Spleen (tissue), 13 donors: ENCODE measurements at regions of chr17 and their contacts with region 1.

Region 1: GRCh38 chr17:61389670-61390478 is 9.8 kb upstream of the TBX2 start:
- DNase-seq: peak; percentile 86
- H3K4me3 ChIP-seq: no peak overlapping the region
- H3K27ac ChIP-seq: peak overlapping the region in 1 of 8 donors; percentile 34
- H3K4me1 ChIP-seq: peaks cover 2 to 22% (median 7%) of the 10 kb centered on the region in 6 donors
- H3K27me3 ChIP-seq: peaks cover 0 to 41% (median 1%) of the 10 kb centered on the region in 7 donors
- CTCF ChIP-seq: peak; percentile 38 to 84 (median 74)
- POLR2A ChIP-seq: no peak

Region 2: DNA sequence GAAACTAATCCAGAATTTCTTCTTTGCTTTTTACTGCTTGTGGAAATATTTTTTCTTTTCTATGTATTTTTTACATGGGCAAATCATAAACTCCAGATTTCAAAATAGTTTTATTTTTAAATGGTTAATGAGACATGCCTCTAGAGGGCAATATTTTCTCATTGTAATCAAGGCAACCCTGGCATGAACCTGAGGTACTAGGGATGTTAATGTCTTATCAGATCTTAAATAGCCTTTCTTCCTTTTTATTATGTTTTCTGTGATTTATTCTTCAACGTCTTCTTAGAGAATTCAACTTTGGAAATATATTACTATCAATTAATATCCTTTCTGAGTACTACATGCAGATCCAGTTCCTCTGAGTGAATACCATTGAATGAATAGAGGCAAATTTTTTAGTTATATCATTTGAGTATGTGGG is 387.5 kb before region 1 on chr17:
- intact Hi-C with region 1: loop called (anchors 10 kb)
- DNase-seq: no peak
- H3K4me3 ChIP-seq: no peak overlapping the region
- H3K27ac ChIP-seq: no peak overlapping the region
- H3K4me1 ChIP-seq: peaks cover 0 to 6% (median 0%) of the 10 kb centered on the region in 6 donors
- H3K27me3 ChIP-seq: no peaks in the 10 kb centered on the region
- CTCF ChIP-seq: peak in 8 of 11 experiments; percentile 30 to 53 (median 43)
- POLR2A ChIP-seq: no peak

Region 3: GRCh38 chr17:61208301-61209105 is 181.4 kb before region 1 on chr17:
- intact Hi-C with region 1: no loop called
- DNase-seq: no peak
- H3K4me3 ChIP-seq: no peak overlapping the region
- H3K27ac ChIP-seq: peak overlapping the region in 6 of 8 donors; percentile 19 to 64 (median 50)
- H3K4me1 ChIP-seq: peaks cover 0 to 17% (median 5%) of the 10 kb centered on the region in 6 donors
- H3K27me3 ChIP-seq: no peaks in the 10 kb centered on the region
- CTCF ChIP-seq: no peak
- POLR2A ChIP-seq: no peak

Region 4: DNA sequence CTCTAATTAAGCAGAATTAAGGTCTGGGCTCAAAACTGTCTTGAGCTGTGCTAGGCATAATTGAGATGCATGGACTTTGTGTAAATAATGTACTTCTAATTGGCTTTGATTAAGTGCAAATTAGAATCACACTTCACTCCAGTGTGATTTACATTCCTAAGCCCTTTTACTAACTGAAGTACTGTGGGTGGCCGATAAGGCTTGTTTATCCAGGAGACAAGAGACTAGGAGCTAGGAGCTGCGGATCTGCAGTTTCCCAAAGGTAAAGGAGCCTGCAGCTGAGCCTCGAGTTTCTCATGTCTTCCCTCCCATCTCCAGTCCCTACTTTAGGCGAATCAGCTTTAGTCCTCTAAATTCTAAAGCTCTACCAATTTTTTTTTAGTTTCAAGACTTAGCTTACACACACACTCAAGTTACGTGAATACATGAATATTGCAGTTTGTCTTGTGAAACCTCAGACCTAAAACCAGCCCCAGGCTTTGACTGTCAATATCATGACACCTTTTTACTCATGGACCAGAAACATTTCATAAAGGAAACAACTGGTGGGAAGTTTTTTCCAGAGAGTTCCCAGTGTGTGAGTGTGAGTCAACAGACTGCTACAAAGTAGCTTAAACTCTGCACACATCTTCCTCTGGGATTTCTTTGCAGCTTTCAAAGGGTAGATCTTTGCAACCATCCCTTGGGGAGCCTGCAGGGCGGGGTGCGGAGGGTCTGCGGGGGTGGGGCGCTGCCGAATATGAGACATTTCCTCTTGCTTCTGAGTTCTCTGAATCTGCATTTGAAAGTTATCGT is 104.2 kb before region 1 on chr17:
- intact Hi-C with region 1: no loop called
- DNase-seq: no peak
- H3K4me3 ChIP-seq: no peak overlapping the region
- H3K27ac ChIP-seq: no peak overlapping the region
- H3K4me1 ChIP-seq: peaks cover 0 to 6% (median 0%) of the 10 kb centered on the region in 6 donors
- H3K27me3 ChIP-seq: no peaks in the 10 kb centered on the region
- CTCF ChIP-seq: no peak
- POLR2A ChIP-seq: no peak

Region 5: GRCh38 chr17:61338000-61338798 is 51.7 kb before region 1 on chr17:
- intact Hi-C with region 1: no loop called
- DNase-seq: no peak
- H3K4me3 ChIP-seq: no peak overlapping the region
- H3K27ac ChIP-seq: peak overlapping the region in 5 of 8 donors; percentile 26 to 63 (median 57)
- H3K4me1 ChIP-seq: peaks cover 0 to 7% (median 0%) of the 10 kb centered on the region in 6 donors
- H3K27me3 ChIP-seq: no peaks in the 10 kb centered on the region
- CTCF ChIP-seq: no peak
- POLR2A ChIP-seq: no peak